ENCODE measurements at regions of chr21 and their contacts with region 1.

Region 1: GRCh38 chr21:27269646-27270045 is 302.8 kb upstream of the ADAMTS5 start:
- DNase-seq: peak; percentile 85
- H3K4me3 ChIP-seq: no peak overlapping the region
- CTCF ChIP-seq: no peak

Region 2: GRCh38 chr21:26945916-26946675 is 323.6 kb before region 1 on chr21:
- in situ Hi-C with region 1: loop called (anchors 25 kb)
- DNase-seq: peak; percentile 16
- H3K4me3 ChIP-seq: no peak overlapping the region
- CTCF ChIP-seq: no peak

Region 3: DNA sequence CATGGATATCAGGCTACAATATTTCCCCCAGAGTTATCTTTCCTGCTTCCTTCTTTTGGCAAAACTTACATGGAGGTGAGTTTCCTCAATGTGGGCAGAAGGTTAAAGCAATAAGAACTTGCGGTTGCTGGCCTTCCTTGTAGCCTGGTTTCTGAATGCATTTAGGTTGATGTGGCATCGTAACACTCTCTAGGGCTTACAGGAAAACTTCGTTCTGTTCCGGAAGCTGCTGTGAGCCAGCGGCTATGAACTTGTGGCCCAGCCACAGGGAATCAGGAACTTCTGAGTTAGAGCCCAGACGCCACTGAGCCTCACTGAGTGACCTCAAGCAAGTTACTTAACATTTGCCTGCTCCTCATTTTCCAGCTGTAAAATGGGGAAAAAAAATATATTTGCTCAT is 320.6 kb after region 1 on chr21:
- in situ Hi-C with region 1: no loop called
- DNase-seq: peak; percentile 75
- H3K4me3 ChIP-seq: no peak overlapping the region
- CTCF ChIP-seq: no peak